ENCODE measurements at regions of chr19 and their contacts with region 1.

Region 1: DNA sequence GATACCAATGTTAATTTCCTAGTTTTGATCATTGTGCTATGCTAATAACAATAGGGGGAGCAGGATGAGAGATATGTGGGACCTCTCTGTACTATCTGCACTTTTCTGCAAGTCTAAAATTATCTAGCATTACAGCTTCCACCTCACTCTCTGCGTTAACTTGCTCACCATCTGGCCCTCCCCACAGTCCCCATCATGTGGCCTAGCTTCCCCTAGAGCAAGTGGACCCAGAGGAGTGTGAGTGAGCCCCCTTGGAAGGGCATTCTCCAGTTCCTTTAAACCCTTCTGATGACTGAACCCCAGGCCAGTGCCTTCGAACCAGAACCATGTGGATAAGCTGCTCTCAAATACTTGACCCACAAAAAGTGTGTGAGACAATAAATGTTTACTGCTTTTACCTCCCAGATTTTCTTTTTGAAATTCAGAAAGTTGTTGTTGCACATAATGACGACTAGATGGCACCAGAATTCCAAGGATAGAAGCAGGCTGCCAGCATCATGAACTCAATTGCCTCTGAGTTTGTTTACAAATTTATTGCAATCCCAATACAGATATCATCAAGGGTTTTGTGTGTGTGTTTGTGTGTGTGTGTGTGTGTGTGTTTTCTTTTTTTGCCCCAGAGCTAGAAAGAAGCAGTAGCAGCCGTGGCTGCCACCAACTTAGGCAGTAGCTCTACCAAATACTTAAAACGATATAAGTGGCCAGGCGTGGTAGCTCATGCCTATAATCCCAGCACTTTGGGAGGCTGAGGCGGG is 49.0 kb upstream of the ZNF780A start:
- DNase-seq: no peak
- H3K4me3 Mint-ChIP-seq: no peak overlapping the region
- H3K27ac Mint-ChIP-seq: no peak overlapping the region
- H3K4me1 Mint-ChIP-seq: peaks cover 17% of the 10 kb centered on the region
- H3K27me3 Mint-ChIP-seq: peaks cover 5% of the 10 kb centered on the region

Region 2: GRCh38 chr19:40165362-40165937 is 25.7 kb after region 1 on chr19:
- CTCF ChIA-PET with region 1: interaction called, 64 read pairs
- intact Hi-C with region 1: loop called (anchors 1 kb)
- DNase-seq: peak; percentile 82
- H3K4me3 Mint-ChIP-seq: no peak overlapping the region
- H3K27ac Mint-ChIP-seq: no peak overlapping the region
- H3K4me1 Mint-ChIP-seq: peaks cover 13% of the 10 kb centered on the region
- H3K27me3 Mint-ChIP-seq: no peaks in the 10 kb centered on the region

Region 3: GRCh38 chr19:40221858-40222837 is 82.4 kb after region 1 on chr19:
- CTCF ChIA-PET with region 1: interaction called, 39 read pairs
- intact Hi-C with region 1: loop called (anchors 1 kb)
- DNase-seq: peak; percentile 86
- H3K4me3 Mint-ChIP-seq: no peak overlapping the region
- H3K27ac Mint-ChIP-seq: no peak overlapping the region
- H3K4me1 Mint-ChIP-seq: peaks cover 22% of the 10 kb centered on the region
- H3K27me3 Mint-ChIP-seq: peaks cover 67% of the 10 kb centered on the region

Region 4: DNA sequence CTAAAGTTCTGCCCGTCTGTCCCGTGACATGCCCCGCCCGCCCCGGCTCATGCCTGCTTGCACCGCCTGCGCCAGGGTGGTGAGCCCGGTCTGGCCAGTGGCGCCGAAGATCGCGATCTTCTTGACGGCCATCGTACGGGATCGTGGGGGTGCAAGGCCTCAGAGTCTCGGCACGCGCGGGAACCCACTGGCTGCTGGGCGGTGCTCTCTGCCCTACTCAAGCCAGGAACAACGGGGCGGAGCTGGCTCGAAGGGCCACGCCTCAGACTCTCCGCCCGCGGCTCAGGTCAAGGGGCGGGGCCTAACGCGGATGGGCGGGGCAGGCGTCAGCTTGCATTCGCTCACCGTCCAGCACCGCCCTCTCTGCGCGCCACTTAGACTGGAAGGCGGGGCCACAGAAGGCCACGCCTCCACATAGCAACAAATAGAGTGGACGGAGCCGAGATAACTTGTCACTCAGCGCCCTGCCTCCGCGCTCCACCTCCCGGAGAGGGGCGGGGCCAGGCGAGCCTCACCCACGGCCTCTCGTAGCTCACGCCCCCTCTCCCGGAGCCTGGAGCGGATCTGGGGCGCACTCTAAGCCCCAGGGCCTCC is 325.9 kb after region 1 on chr19 and contains the start of gene BLVRB:
- CTCF ChIA-PET with region 1: no interaction called
- intact Hi-C with region 1: loop called (anchors 10 kb)
- DNase-seq: peak; percentile 100
- H3K4me3 Mint-ChIP-seq: peak within 1 kb of the TSS; percentile 78
- H3K27ac Mint-ChIP-seq: peak within 1 kb of the TSS; percentile 50
- H3K4me1 Mint-ChIP-seq: peaks cover 26% of the 10 kb centered on the region
- H3K27me3 Mint-ChIP-seq: peaks cover 10% of the 10 kb centered on the region
- total RNA-seq, gene BLVRB: 29.4 to 30.2 TPM

Region 5: GRCh38 chr19:40598121-40598917 is 458.6 kb after region 1 on chr19:
- CTCF ChIA-PET with region 1: no interaction called
- intact Hi-C with region 1: loop called (anchors 5 kb)
- DNase-seq: peak; percentile 91
- H3K4me3 Mint-ChIP-seq: peak overlapping the region; percentile 12
- H3K27ac Mint-ChIP-seq: no peak overlapping the region
- H3K4me1 Mint-ChIP-seq: peaks cover 50% of the 10 kb centered on the region
- H3K27me3 Mint-ChIP-seq: peaks cover 41% of the 10 kb centered on the region

Measured in activated naive CD4-positive, alpha-beta T cell treated with anti-CD3 and anti-CD28 coated beads for 36 hours (primary cell).